ENCODE measurements at regions of chr2 and their contacts with region 1.

Region 1: DNA sequence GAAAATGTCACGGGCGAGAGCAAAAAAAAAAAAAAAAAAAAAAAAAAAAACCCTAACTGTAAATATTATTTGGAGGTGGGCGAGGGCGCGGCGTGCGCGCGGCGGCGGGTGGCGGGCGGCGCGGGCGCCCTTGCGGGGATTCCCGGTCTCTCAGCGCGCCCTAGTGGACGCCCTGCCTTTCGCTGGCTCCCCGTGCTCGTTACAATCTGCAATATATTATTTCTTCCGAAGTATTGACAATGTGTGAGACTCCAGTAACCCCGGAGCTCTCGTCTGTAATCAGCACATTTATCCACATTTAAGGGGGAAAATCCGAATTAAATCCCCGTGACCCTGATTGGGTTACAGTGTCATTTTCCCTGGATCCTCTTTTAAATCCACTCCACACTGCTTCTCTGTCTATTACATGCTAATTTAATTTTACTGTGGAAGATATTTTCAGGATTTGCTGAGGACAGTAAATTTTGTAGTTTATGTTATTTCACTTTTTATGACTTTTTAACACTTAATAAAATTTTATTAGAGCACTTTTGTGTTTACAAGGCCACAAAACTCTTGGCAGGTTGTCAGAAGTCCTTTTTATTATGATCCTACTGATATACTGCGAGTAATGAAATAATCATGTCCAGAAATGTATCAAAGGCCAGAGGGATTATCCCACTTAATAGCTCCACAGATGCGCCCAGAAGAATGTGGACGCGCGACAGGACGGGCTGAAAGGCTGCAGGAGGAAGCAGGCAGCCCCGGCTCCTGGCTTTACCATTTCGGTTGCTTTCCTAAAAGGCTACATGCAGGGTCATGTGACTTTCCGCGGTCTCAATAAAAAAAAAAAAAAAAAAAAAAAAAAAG is 369.1 kb downstream of the MTX2 start:
- DNase-seq: peak; percentile 45 to 87 (median 76)

Region 2: GRCh38 chr2:176126929-176127773 is 511.2 kb before region 1 on chr2:
- intact Hi-C with region 1: loop called (anchors 2 kb)
- DNase-seq: peak; percentile 12 to 92 (median 79)

Region 3: DNA sequence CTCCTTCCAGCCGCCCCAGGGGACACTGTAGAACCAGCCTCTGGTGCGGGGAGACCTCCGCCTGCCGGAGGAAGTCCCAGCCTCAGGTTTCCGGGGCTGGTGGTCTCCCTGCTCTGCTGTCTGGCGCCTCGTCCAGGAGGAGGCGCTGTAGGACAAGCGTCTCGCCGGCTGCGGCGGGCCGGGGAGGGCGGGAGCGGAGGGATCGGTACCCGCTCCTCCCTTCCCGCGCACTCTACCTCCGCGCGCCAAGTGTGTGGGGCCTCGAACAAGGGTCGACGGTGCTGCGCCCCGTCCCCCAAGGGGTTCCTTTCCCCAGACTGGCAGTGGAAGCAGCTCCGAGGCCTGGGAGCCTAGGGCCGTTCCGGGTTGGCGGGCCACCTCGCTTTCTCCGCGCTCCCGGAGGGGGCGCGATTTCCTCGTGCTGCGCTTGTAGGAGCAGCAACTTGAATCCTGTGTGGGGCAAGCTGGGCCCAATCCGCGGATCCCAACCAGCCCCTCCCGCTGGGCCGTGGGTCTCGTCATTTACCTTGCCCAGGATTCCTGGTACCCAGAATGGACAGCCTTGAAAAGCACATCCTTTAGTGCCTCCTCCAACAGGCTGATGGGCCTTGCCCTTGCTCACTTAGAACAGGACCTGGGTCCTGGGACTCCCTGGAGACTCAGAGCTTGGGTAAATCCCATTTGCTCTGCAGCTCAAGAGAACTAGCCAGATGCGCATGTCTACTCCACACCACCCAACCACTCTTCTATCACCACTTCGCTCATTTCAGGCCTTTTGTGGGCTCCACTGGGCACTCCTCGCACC is 497.7 kb before region 1 on chr2:
- intact Hi-C with region 1: loop called (anchors 5 kb)
- DNase-seq: peak; percentile 22 to 85 (median 68)

Region 4: GRCh38 chr2:176554101-176555048 is 84.0 kb before region 1 on chr2:
- intact Hi-C with region 1: loop called (anchors 10 kb)
- DNase-seq: peak in 28 of 42 donors; percentile 9 to 70 (median 34)

Region 5: DNA sequence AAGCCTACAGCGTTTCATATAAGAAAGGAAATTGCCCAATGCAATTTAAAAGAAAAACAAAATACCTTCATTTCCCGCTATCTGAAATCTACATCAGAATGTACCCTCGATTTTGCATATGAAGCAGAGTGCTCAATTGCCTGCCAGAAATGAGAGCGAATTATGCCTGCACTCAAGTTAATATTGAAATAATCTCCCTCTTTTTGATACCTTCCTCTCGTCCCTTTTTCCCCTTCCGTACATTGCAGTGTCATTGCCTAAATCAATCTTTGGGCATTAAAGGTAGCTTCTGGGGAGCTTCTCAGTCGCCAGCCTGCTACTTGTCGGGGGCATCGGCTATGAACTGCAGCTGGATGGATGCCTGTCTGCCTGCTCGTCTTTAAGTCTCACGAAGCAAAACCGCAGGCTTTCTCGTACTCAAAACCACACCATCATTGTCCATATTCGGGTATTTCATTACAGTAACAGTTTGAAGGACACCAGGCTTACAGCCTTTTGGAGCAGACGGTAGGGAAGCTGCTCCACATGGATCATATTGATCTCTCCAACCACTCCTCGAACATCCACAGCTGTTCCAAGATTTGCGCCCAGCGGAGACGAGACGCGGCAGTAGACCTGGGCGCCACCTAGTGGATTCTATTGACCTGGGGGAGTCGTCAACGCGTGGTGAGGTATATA is 510.2 kb after region 1 on chr2:
- intact Hi-C with region 1: loop called (anchors 10 kb)
- DNase-seq: peak; percentile 56 to 92 (median 81)

Measured in head of caudate nucleus (tissue), 42 donors.